Left ventricle myocardium superior (tissue), 1 donor: ENCODE measurements at regions of chr17 and their contacts with region 1.

Region 1: DNA sequence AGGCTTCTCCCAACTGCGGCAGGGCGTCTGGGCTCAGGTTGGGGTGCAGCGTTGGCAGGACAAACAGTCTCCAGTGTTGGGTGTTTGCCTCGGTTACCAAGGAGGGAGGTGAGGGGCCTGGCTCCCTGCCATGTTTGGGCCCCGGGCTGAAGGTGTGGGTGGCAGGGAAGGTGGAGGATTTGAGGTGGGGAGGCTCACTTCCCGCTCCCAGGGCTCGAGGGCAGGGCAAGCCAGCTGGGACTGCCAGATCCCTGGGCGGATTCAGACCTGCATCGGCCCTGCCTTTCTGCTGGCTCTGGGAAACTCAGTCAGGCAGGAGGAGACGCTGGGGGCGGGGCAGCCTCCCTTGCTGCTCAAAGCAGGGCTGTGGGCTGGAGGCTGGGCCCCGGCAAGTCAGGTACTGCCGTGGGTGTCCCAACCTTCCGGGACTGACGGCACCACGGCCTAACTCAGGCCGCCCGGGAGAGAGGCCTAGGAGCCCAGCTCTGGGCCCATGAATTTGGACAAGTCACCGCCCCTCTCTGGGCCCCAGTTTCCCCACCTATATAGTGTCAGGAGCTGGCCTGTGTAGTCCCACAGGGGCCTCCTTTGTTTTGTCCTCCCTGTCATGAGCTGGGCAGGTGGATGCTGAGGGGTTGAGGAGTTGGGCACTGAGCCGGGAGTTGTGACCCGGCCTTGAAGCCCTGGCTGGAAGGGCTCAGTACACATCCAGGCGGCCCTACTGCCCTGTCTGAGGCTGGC is 31.4 kb upstream of the KRT17 start:
- DNase-seq: no peak
- ATAC-seq: no peak

Region 2: GRCh38 chr17:40909351-40909750 is 746.4 kb before region 1 on chr17:
- intact Hi-C with region 1: loop called (anchors 10 kb)
- DNase-seq: peak; percentile 70
- ATAC-seq: peak; percentile 90

Region 3: GRCh38 chr17:41610965-41611640 is 44.7 kb before region 1 on chr17:
- intact Hi-C with region 1: no loop called
- DNase-seq: no peak
- ATAC-seq: no peak